Left cardiac atrium (tissue), 4 donors: ENCODE measurements at regions of chr1 and their contacts with region 1.

Region 1: GRCh38 chr1:93437976-93438605 is 9.8 kb upstream of the FNBP1L start:
- DNase-seq: no peak
- ATAC-seq: peak; percentile 47 to 62

Region 2: GRCh38 chr1:93374334-93375106 is 63.6 kb before region 1 on chr1:
- intact Hi-C with region 1: no loop called
- DNase-seq: no peak
- ATAC-seq: peak in 1 of 2 donors; percentile 72

Region 3: DNA sequence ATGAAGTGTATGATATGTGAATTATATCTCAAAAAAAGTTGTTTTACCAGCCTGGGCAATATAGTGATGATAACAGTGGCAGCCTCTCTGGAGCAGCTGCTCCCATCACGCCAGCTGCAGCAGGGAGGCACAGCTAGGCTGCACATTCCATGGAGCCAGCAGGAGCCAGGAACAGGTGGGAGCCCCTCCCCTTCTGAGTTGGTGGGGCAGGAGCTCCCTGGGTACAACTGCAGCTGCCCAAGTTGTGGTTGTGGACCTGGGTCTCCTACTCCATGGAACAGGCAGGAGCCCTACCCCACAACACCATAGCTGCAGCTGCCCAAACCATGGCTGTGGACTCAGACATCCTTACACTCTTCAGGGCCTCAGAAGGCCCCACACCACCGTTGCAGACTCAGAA is 11.9 kb before region 1 on chr1:
- intact Hi-C with region 1: no loop called
- DNase-seq: no peak
- ATAC-seq: no peak

Region 4: GRCh38 chr1:93629099-93630059 is 191.3 kb after region 1 on chr1:
- intact Hi-C with region 1: loop called (anchors 5 kb)
- DNase-seq: no peak
- ATAC-seq: peak; percentile 67 to 69